GM12878 (cell line): ENCODE measurements at regions of chr12 and their contacts with region 1.

Region 1: GRCh38 chr12:98572010-98572409 is 21.5 kb upstream of the SLC25A3 start:
- DNase-seq: no peak
- ATAC-seq: peak; percentile 53; the same call in 2 of the 3 replicates
- H3K4me3 ChIP-seq: no peak overlapping the region
- H3K27ac ChIP-seq: no peak overlapping the region
- H3K4me1 ChIP-seq: no peaks in the 10 kb centered on the region
- H3K27me3 ChIP-seq: no peaks in the 10 kb centered on the region
- CTCF ChIP-seq: peak; percentile 4 to 34 (median 31); a peak in 2 of 6 replicates
- EP300 ChIP-seq: no peak
- POLR2A ChIP-seq: no peak
- RAD21 ChIP-seq: no peak

Region 2: GRCh38 chr12:98544751-98545150 is 27.3 kb before region 1 on chr12:
- CTCF ChIA-PET with region 1: interaction called, 29 read pairs
- POLR2A ChIA-PET with region 1: no interaction called
- RAD21 ChIA-PET with region 1: no interaction called
- SMC1A ChIA-PET with region 1: interaction called, 3 read pairs
- in situ Hi-C with region 1: no loop called
- intact Hi-C with region 1: no loop called
- DNase-seq: no peak
- ATAC-seq: no peak
- H3K4me3 ChIP-seq: no peak overlapping the region
- H3K27ac ChIP-seq: no peak overlapping the region
- H3K4me1 ChIP-seq: no peaks in the 10 kb centered on the region
- H3K27me3 ChIP-seq: no peaks in the 10 kb centered on the region
- CTCF ChIP-seq: no peak
- EP300 ChIP-seq: no peak
- POLR2A ChIP-seq: no peak
- RAD21 ChIP-seq: no peak

Region 3: DNA sequence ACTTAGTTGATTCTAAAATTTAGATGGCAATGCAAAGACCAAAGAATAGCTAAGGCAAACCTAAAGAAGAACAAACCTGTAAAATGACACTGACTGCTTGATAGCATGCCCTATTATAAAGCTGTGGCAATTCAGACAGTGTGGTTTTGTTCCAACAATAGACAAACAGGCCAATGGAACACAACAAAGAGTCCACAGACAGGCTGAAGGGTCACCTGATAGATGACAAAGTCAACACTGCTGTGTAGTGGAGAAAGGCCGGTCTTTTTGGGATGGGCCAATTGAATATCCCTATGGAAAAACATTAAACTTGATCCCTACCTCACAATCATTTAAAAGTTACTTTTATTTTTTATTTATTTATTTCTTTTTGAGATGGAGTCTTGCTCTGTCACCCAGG is 12.3 kb before region 1 on chr12:
- CTCF ChIA-PET with region 1: interaction called, 16 read pairs
- POLR2A ChIA-PET with region 1: no interaction called
- RAD21 ChIA-PET with region 1: no interaction called
- SMC1A ChIA-PET with region 1: interaction called, 3 read pairs
- in situ Hi-C with region 1: no loop called
- intact Hi-C with region 1: no loop called
- DNase-seq: no peak
- ATAC-seq: no peak
- H3K4me3 ChIP-seq: no peak overlapping the region
- H3K27ac ChIP-seq: no peak overlapping the region
- H3K4me1 ChIP-seq: no peaks in the 10 kb centered on the region
- H3K27me3 ChIP-seq: no peaks in the 10 kb centered on the region
- CTCF ChIP-seq: no peak
- EP300 ChIP-seq: no peak
- POLR2A ChIP-seq: no peak
- RAD21 ChIP-seq: no peak

Region 4: GRCh38 chr12:98635657-98636323 is 63.8 kb after region 1 on chr12:
- CTCF ChIA-PET with region 1: interaction called, 12 read pairs
- POLR2A ChIA-PET with region 1: interaction called, 8 read pairs
- RAD21 ChIA-PET with region 1: interaction called, 3 read pairs
- SMC1A ChIA-PET with region 1: interaction called, 6 read pairs
- in situ Hi-C with region 1: no loop called
- intact Hi-C with region 1: no loop called
- DNase-seq: peak; percentile 44
- ATAC-seq: peak; percentile 92
- H3K4me3 ChIP-seq: peak overlapping the region; percentile 16; the same call in 1 of the 2 replicates
- H3K27ac ChIP-seq: peak overlapping the region; percentile 37; the same call in 1 of the 2 replicates
- H3K4me1 ChIP-seq: peaks cover 20% of the 10 kb centered on the region
- H3K27me3 ChIP-seq: no peaks in the 10 kb centered on the region
- CTCF ChIP-seq: no peak
- EP300 ChIP-seq: peak in 1 of 2 experiments; percentile 40; a peak in 1 of 4 replicates
- POLR2A ChIP-seq: no peak
- RAD21 ChIP-seq: no peak

Region 5: DNA sequence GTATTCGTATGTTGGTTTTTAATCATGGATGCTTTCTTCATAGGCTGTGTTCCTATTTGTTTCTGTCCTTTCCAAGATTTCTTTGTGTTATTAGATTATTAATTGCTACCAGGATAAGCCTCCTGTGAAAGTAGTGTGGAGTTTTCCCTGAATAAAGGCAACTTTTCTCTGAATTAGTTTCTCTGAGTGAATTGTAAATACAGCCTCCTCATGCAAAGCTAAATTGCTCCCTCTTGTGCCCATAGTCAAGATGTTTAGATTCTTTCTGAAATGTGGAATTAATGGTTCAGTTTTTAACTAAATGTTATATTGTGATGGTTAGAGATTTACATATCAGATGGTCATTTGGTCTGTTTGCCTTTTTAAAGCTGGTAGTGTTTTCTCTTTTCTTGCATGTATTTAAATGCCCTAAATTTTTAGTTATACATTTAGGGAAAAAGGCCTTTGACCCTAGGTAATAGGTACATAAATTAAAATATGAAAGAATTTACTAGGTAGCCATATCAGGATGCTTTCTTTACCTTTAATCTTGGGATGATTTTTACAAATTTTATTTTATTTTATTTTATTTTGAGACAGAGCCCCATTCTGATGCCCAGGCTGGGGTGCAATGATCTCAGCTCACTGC is 82.0 kb after region 1 on chr12:
- CTCF ChIA-PET with region 1: interaction called, 134 read pairs
- POLR2A ChIA-PET with region 1: interaction called, 6 read pairs
- RAD21 ChIA-PET with region 1: interaction called, 66 read pairs
- SMC1A ChIA-PET with region 1: interaction called, 107 read pairs
- in situ Hi-C with region 1: no loop called
- intact Hi-C with region 1: loop called (anchors 1 kb)
- DNase-seq: no peak
- ATAC-seq: peak; percentile 68
- H3K4me3 ChIP-seq: no peak overlapping the region
- H3K27ac ChIP-seq: no peak overlapping the region
- H3K4me1 ChIP-seq: no peaks in the 10 kb centered on the region; the same call in 1 of the 2 replicates
- H3K27me3 ChIP-seq: no peaks in the 10 kb centered on the region
- CTCF ChIP-seq: peak; percentile 52 to 77 (median 54)
- EP300 ChIP-seq: no peak
- POLR2A ChIP-seq: no peak
- RAD21 ChIP-seq: peak; percentile 87

Region 6: GRCh38 chr12:98780261-98780660 is 208.3 kb after region 1 on chr12:
- CTCF ChIA-PET with region 1: no interaction called
- POLR2A ChIA-PET with region 1: no interaction called
- RAD21 ChIA-PET with region 1: no interaction called
- SMC1A ChIA-PET with region 1: no interaction called
- in situ Hi-C with region 1: no loop called
- intact Hi-C with region 1: no loop called
- DNase-seq: no peak
- ATAC-seq: no peak
- H3K4me3 ChIP-seq: no peak overlapping the region
- H3K27ac ChIP-seq: no peak overlapping the region
- H3K4me1 ChIP-seq: no peaks in the 10 kb centered on the region
- H3K27me3 ChIP-seq: no peaks in the 10 kb centered on the region
- CTCF ChIP-seq: no peak
- EP300 ChIP-seq: no peak
- POLR2A ChIP-seq: no peak
- RAD21 ChIP-seq: no peak